Body of pancreas (tissue), 4 donors: ENCODE measurements at regions of chr10 and their contacts with region 1.

Region 1: GRCh38 chr10:12902135-12902572 is 99.4 kb downstream of the CCDC3 start:
- DNase-seq: peak; percentile 54 to 72 (median 59)
- ATAC-seq: no peak
- H3K4me3 ChIP-seq: no peak overlapping the region
- H3K27ac ChIP-seq: no peak overlapping the region
- H3K4me1 ChIP-seq: no peaks in the 10 kb centered on the region
- H3K27me3 ChIP-seq: no peaks in the 10 kb centered on the region
- CTCF ChIP-seq: peak; percentile 59 to 77 (median 68)
- POLR2A ChIP-seq: no peak

Region 2: DNA sequence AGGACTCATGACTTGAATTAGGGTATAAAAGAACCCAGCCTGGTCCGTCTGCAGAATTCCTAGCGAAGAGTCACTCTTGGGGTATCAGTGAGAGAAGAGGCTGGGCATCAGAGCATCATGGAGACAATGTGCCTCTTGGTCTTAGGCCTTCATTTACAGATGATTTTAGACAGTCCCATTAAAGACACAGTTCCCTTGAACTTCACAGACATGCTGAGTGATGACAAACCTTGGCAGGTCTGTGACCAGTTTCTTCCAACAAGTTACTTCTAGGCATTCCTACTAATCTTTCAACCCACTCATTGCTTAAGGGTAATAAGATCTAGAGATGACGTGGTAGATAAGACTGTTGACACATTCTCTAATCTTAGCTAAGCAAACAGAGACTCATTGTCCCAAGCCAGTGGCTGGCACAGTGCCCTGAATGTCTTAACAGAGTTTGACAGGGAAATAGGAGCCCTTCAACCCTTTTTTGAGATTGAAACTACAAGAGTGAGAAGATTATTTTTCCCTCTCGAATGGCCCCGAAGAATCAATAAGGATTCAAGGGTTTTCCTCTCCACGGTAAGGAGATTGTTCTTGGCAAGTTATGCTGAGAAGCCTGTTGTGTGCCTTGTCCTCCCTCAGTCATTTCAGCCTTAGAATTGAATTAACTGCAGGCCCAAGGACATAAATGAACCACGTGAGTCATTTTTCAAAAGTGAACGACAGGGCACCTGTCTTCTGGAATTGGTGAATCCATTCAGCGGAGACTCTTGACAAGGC is 181.8 kb before region 1 on chr10:
- intact Hi-C with region 1: loop called (anchors 10 kb)
- DNase-seq: peak; percentile 88 to 92 (median 88)
- ATAC-seq: peak; percentile 94
- H3K4me3 ChIP-seq: no peak overlapping the region
- H3K27ac ChIP-seq: peak overlapping the region; percentile 7 to 71 (median 62)
- H3K4me1 ChIP-seq: peaks cover 25% of the 10 kb centered on the region
- H3K27me3 ChIP-seq: no peaks in the 10 kb centered on the region
- CTCF ChIP-seq: no peak
- POLR2A ChIP-seq: no peak

Region 3: DNA sequence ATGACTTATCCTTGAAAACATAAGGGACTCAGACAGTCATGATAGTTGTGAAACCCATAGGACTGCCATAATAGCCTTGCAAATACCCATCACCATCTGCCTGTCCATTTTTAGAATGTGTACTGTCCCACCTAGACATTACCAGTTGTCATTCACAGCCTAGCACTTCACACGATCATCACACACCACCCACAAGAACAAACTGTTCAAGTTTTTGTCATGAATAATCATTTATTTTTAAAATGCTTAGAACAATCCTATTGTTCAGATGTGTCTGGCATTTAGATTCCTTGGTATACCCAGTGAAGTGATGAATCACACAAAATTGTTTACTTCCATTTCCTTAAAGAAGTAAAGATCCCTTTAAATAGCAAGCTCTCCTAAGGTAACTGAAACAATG is 52.7 kb after region 1 on chr10:
- intact Hi-C with region 1: no loop called
- DNase-seq: no peak
- ATAC-seq: no peak
- H3K4me3 ChIP-seq: no peak overlapping the region
- H3K27ac ChIP-seq: no peak overlapping the region
- H3K4me1 ChIP-seq: no peaks in the 10 kb centered on the region
- H3K27me3 ChIP-seq: no peaks in the 10 kb centered on the region
- CTCF ChIP-seq: no peak
- POLR2A ChIP-seq: no peak

Region 4: GRCh38 chr10:13311177-13311575 is 409.0 kb after region 1 on chr10:
- intact Hi-C with region 1: no loop called
- DNase-seq: no peak
- ATAC-seq: no peak
- H3K4me3 ChIP-seq: no peak overlapping the region
- H3K27ac ChIP-seq: no peak overlapping the region
- H3K4me1 ChIP-seq: no peaks in the 10 kb centered on the region
- H3K27me3 ChIP-seq: no peaks in the 10 kb centered on the region
- CTCF ChIP-seq: no peak
- POLR2A ChIP-seq: no peak